CD4-positive, alpha-beta memory T cell (primary cell): ENCODE measurements at regions of chr6 and their contacts with region 1.

Region 1: GRCh38 chr6:33860706-33861474 is 57.1 kb upstream of the MLN start:
- DNase-seq: peak; percentile 44 to 59 (median 53)
- H3K4me3 ChIP-seq: no peak overlapping the region
- H3K4me3 Mint-ChIP-seq: peak overlapping the region in 7 of 8 donors; percentile 1 to 75 (median 57)
- H3K27ac ChIP-seq: no peak overlapping the region
- H3K27ac Mint-ChIP-seq: peak overlapping the region in 2 of 7 donors; percentile 26 to 43
- H3K4me1 ChIP-seq: peaks cover 70% of the 10 kb centered on the region
- H3K4me1 Mint-ChIP-seq: peaks cover 40 to 84% (median 59%) of the 10 kb centered on the region in 4 donors
- H3K27me3 ChIP-seq: no peaks in the 10 kb centered on the region
- H3K27me3 Mint-ChIP-seq: peaks cover 0 to 3% of the 10 kb centered on the region in 2 donors

Region 2: GRCh38 chr6:33840048-33840926 is 20.6 kb before region 1 on chr6:
- CTCF ChIA-PET with region 1: interaction called, 3 read pairs
- POLR2A ChIA-PET with region 1: interaction called, 10 read pairs
- intact Hi-C with region 1: no loop called
- DNase-seq: peak in 2 of 5 donors; percentile 24 to 49
- H3K4me3 ChIP-seq: no peak overlapping the region
- H3K4me3 Mint-ChIP-seq: peak overlapping the region in 1 of 8 donors; percentile 44
- H3K27ac ChIP-seq: no peak overlapping the region
- H3K27ac Mint-ChIP-seq: peak overlapping the region in 1 of 7 donors; percentile 0
- H3K4me1 ChIP-seq: peaks cover 18% of the 10 kb centered on the region
- H3K4me1 Mint-ChIP-seq: peaks cover 8 to 17% (median 12%) of the 10 kb centered on the region in 4 donors
- H3K27me3 ChIP-seq: no peaks in the 10 kb centered on the region
- H3K27me3 Mint-ChIP-seq: peaks cover 0 to 1% of the 10 kb centered on the region in 2 donors

Region 3: GRCh38 chr6:33904050-33904746 is 43.3 kb after region 1 on chr6:
- CTCF ChIA-PET with region 1: interaction called, 7 read pairs
- POLR2A ChIA-PET with region 1: interaction called, 22 read pairs
- intact Hi-C with region 1: loop called (anchors 2 kb)
- DNase-seq: peak; percentile 76 to 84 (median 81)
- H3K4me3 ChIP-seq: peak overlapping the region; percentile 25 to 36
- H3K4me3 Mint-ChIP-seq: peak overlapping the region; percentile 62 to 83 (median 78)
- H3K27ac ChIP-seq: peak overlapping the region; percentile 51
- H3K27ac Mint-ChIP-seq: peak overlapping the region; percentile 84 to 94 (median 91)
- H3K4me1 ChIP-seq: peaks cover 64% of the 10 kb centered on the region
- H3K4me1 Mint-ChIP-seq: peaks cover 54 to 83% (median 69%) of the 10 kb centered on the region in 4 donors
- H3K27me3 ChIP-seq: no peaks in the 10 kb centered on the region
- H3K27me3 Mint-ChIP-seq: no peaks in the 10 kb centered on the region

Region 4: DNA sequence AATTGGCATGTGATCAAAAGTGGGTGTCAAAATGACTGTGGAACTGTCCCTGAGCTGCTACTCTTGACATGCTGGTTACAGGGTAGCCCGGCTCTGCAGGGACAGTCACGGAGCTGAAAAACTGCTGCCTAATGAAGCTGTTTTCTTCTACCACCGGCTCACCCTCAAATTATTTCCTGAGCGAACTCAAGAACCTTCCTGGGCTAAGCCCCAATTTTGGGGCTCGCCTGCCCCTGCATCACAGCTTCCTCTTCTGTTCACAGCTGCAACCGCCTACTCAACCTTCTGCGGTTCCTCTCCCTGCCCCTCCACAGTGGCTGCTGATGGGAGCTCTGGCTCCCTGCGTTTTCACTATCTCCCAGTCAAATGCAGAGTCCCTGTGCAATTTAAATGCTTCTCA is 53.8 kb after region 1 on chr6:
- CTCF ChIA-PET with region 1: interaction called, 15 read pairs
- POLR2A ChIA-PET with region 1: interaction called, 19 read pairs
- intact Hi-C with region 1: loop called (anchors 2 kb)
- DNase-seq: peak; percentile 43 to 63 (median 52)
- H3K4me3 ChIP-seq: peak overlapping the region in 1 of 2 donors; percentile 25
- H3K4me3 Mint-ChIP-seq: peak overlapping the region; percentile 53 to 86 (median 77)
- H3K27ac ChIP-seq: peak overlapping the region; percentile 35
- H3K27ac Mint-ChIP-seq: peak overlapping the region; percentile 74 to 97 (median 82)
- H3K4me1 ChIP-seq: peaks cover 39% of the 10 kb centered on the region
- H3K4me1 Mint-ChIP-seq: peaks cover 34 to 56% (median 50%) of the 10 kb centered on the region in 4 donors
- H3K27me3 ChIP-seq: no peaks in the 10 kb centered on the region
- H3K27me3 Mint-ChIP-seq: peaks cover 0 to 1% of the 10 kb centered on the region in 2 donors